GM12878 (cell line): ENCODE measurements at regions of chr2 and their contacts with region 1.

Region 1: DNA sequence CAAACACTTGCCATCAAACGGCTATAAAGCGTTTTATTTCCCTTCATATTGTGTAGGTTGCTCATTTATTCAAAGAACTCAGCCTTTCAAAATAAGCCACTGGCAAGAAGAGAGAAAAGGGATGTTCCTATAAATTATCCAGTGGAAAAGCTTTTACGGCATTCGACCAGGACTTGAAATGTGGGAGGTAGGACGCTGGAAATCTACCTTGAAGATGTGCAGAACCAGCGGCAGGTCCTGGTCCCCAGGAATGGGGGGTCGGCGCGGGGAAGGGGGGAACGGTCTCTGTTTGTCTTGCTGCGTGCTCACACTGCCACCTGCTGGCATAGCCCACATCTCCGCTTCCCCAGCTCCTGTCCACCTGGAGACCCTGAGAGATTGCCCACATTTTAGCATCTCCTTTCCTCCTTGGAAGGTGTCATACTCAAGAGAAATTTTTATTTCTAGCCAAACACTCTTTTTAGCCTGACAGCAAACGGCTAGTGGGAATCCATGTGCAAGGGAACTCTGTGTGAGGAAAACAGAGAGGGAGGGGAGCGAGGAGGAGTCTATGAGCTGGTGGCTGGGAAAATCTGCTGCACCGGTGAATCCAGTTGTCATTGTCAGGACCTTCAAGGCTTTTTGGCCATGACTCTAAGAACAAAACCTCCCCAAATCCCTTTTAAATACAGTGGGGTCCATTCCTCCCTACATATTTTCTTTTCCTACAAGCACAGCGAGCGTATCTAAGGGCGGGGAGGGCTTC is 349.0 kb upstream of the PKDCC start:
- DNase-seq: no peak
- ATAC-seq: peak; percentile 66
- H3K4me3 ChIP-seq: no peak overlapping the region
- H3K27ac ChIP-seq: no peak overlapping the region
- H3K4me1 ChIP-seq: no peaks in the 10 kb centered on the region
- H3K27me3 ChIP-seq: peaks cover 0 to 3% of the 10 kb centered on the region in 2 experiments; a peak in 2 of 4 replicates
- CTCF ChIP-seq: peak; percentile 66 to 83 (median 80)
- EP300 ChIP-seq: no peak
- POLR2A ChIP-seq: no peak
- RAD21 ChIP-seq: peak; percentile 55

Region 2: GRCh38 chr2:39913648-39914461 is 1785.0 kb before region 1 on chr2:
- CTCF ChIA-PET with region 1: interaction called, 7 read pairs
- POLR2A ChIA-PET with region 1: no interaction called
- RAD21 ChIA-PET with region 1: no interaction called
- SMC1A ChIA-PET with region 1: no interaction called
- in situ Hi-C with region 1: no loop called
- intact Hi-C with region 1: loop called (anchors 5 kb)
- DNase-seq: peak; percentile 7
- ATAC-seq: peak; percentile 75
- H3K4me3 ChIP-seq: no peak overlapping the region
- H3K27ac ChIP-seq: no peak overlapping the region
- H3K4me1 ChIP-seq: no peaks in the 10 kb centered on the region
- H3K27me3 ChIP-seq: no peaks in the 10 kb centered on the region
- CTCF ChIP-seq: peak; percentile 59 to 75 (median 67); a peak in 5 of 6 replicates
- EP300 ChIP-seq: no peak
- POLR2A ChIP-seq: no peak
- RAD21 ChIP-seq: peak; percentile 89

Region 3: DNA sequence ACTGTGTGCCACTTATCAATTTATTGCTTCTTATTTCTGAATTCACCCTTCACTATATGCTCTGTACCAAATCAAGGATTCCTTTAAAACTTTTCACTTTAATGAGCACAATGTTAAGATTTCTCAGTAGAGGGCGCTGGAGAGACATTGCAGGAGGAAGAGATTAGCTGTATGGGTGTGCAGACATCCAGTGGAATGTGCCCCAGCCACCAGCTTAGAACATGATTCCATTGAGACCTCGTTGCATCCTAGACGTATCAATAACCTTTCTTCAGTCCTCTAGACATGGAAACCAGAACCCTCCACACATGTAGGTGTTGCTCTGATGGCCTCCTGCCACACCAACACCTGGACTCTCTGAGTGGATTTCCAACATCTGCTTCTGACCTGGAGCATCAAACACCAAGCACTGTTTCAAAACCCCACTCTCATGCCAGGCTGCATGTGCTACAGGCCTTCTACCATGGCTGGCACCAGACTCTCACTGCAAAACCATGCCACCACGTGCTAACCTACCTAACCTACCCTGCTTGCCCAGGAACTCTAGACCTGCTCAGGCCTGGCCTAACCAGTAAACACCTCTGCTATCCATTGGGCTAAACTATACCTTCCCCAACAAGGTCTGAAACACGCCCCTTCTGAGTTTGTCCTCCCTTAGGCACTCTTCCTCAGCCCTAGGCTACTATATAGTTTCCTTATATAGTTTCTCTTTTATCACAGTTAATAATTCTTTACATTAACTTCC is 284.2 kb before region 1 on chr2:
- CTCF ChIA-PET with region 1: interaction called, 29 read pairs
- POLR2A ChIA-PET with region 1: no interaction called
- RAD21 ChIA-PET with region 1: interaction called, 13 read pairs
- SMC1A ChIA-PET with region 1: interaction called, 14 read pairs
- in situ Hi-C with region 1: loop called (anchors 10 kb)
- intact Hi-C with region 1: loop called (anchors 1 kb)
- DNase-seq: peak; percentile 5
- ATAC-seq: peak; percentile 82
- H3K4me3 ChIP-seq: no peak overlapping the region
- H3K27ac ChIP-seq: no peak overlapping the region
- H3K4me1 ChIP-seq: no peaks in the 10 kb centered on the region
- H3K27me3 ChIP-seq: no peaks in the 10 kb centered on the region
- CTCF ChIP-seq: peak; percentile 52 to 64 (median 53); a peak in 5 of 6 replicates
- EP300 ChIP-seq: no peak
- POLR2A ChIP-seq: no peak
- RAD21 ChIP-seq: peak; percentile 77

Region 4: DNA sequence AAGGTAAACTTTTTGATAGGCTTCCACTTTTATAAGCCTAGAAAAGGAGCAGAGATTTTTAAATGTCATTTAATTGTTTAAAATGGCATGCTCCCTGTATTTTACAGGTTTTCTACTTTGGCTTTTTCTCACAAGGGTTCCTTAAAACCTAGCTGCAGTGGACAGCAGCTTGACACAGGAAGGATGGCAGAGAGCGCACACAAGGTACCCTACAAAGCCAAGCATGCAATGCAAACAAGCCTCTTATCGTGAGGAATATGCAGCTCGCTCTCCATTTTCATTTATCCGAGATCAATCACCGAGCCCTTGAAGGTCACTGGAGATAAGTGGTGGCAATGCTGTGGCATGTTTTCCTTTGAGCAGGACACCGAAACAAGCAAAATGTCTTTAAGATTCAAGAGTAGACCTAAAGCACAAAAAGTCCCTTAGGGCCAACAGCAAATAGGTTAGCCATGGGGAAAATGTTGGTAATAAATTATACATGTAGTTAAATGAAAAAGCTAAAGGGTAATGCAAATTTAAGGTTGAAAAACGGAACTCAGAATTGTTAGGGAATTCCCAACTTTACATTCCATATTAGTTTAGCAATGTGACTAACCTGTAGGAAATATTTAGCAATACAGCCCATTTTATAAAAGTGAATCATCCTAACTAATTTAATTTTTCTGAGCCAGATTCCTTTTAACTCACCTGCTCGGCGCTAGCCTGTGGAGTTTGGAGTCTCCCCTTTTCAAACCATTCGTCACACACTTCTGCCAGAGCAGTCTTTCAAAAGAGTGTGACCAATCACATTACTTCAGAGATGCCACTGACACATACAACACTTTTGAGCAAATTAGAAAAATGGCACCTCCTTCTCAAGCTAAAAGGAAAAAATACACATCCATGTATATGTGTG is 11.1 kb after region 1 on chr2:
- CTCF ChIA-PET with region 1: interaction called, 14 read pairs
- POLR2A ChIA-PET with region 1: no interaction called
- RAD21 ChIA-PET with region 1: interaction called, 3 read pairs
- SMC1A ChIA-PET with region 1: interaction called, 3 read pairs
- in situ Hi-C with region 1: no loop called
- intact Hi-C with region 1: no loop called
- DNase-seq: no peak
- ATAC-seq: peak; percentile 65
- H3K4me3 ChIP-seq: no peak overlapping the region
- H3K27ac ChIP-seq: no peak overlapping the region
- H3K4me1 ChIP-seq: peaks cover 8% of the 10 kb centered on the region
- H3K27me3 ChIP-seq: no peaks in the 10 kb centered on the region
- CTCF ChIP-seq: no peak
- EP300 ChIP-seq: no peak
- POLR2A ChIP-seq: no peak
- RAD21 ChIP-seq: no peak

Region 5: GRCh38 chr2:41750829-41751228 is 52.0 kb after region 1 on chr2:
- CTCF ChIA-PET with region 1: no interaction called
- POLR2A ChIA-PET with region 1: no interaction called
- RAD21 ChIA-PET with region 1: no interaction called
- SMC1A ChIA-PET with region 1: no interaction called
- in situ Hi-C with region 1: no loop called
- intact Hi-C with region 1: no loop called
- DNase-seq: no peak
- ATAC-seq: no peak
- H3K4me3 ChIP-seq: no peak overlapping the region
- H3K27ac ChIP-seq: no peak overlapping the region
- H3K4me1 ChIP-seq: no peaks in the 10 kb centered on the region
- H3K27me3 ChIP-seq: no peaks in the 10 kb centered on the region
- CTCF ChIP-seq: no peak
- EP300 ChIP-seq: no peak
- POLR2A ChIP-seq: no peak
- RAD21 ChIP-seq: no peak

Region 6: DNA sequence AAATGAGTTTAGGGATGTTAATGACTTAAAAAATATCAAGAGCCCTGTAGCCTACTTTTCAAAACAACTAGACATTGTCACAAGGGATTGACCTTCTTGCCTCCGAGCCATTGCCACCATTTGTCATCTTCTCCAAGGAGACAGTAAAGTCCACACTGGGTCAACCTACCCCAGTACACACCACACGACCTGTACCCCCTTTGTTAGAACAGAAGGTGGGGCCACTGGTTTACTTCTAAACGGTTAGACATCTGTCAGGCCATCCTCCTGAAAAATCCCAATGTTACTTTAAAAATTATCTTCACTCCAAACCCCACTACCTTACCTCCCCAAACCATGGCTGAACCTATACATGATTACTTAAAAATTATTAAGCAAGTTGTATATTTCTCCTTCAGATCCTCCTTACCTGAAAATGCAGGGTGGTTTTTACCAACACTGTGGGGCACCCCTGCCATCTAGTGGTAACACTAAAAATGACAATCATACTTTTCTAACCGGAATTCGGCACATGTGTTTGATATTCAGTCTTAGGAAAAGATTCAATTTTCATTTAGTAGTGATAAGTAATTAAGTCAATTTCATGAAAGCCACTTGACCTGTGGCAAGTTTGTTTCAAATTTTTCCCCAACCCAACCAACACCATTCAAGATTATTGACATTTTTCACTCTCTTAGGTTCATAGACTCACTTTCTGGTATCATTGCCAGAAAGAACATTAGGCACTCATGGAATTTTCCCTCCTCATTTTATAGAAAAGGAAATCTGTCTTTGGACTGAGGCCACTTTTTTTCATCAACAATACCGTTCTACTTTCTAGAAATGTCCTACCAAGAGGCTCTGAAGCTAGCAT is 83.7 kb after region 1 on chr2:
- CTCF ChIA-PET with region 1: interaction called, 6 read pairs
- POLR2A ChIA-PET with region 1: no interaction called
- RAD21 ChIA-PET with region 1: interaction called, 3 read pairs
- SMC1A ChIA-PET with region 1: no interaction called
- in situ Hi-C with region 1: no loop called
- intact Hi-C with region 1: loop called (anchors 5 kb)
- DNase-seq: peak; percentile 15
- ATAC-seq: peak; percentile 71
- H3K4me3 ChIP-seq: no peak overlapping the region
- H3K27ac ChIP-seq: no peak overlapping the region
- H3K4me1 ChIP-seq: no peaks in the 10 kb centered on the region
- H3K27me3 ChIP-seq: no peaks in the 10 kb centered on the region
- CTCF ChIP-seq: peak; percentile 74 to 87 (median 76)
- EP300 ChIP-seq: no peak
- POLR2A ChIP-seq: no peak
- RAD21 ChIP-seq: peak; percentile 95